Endothelial cell of umbilical vein (primary cell): ENCODE measurements at regions of chr13 and their contacts with region 1.

Region 1: GRCh38 chr13:98466634-98467236 is 110.2 kb downstream of the STK24 start:
- DNase-seq: peak; percentile 67
- H3K4me3 ChIP-seq: no peak overlapping the region
- H3K27ac ChIP-seq: no peak overlapping the region
- H3K4me1 ChIP-seq: no peaks in the 10 kb centered on the region
- H3K27me3 ChIP-seq: no peaks in the 10 kb centered on the region
- CTCF ChIP-seq: peak; percentile 75 to 77
- POLR2A ChIP-seq: no peak

Region 2: DNA sequence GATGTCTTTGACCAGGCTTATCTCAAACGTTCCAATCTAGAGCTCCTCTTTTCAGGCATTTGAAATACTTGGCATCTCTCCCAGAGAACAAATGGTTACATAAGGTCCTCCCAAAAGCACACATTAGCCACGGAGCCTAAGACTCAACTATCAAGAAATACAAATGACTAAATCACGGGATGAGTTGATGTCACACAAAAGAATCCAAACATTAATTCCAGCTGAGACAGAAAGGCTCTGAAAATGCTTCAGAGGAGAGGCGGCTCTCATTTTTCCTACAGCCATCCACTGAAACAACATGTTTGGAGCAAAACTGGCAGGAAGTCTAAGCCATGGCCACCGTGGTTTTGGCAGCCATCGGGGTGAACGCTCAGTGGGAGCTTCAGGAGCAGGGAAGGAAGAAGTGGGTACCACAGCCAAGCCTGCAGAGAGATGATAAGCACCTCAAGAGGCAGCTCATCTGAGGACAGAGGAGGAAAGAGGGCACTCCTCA is 12.3 kb before region 1 on chr13:
- CTCF ChIA-PET with region 1: interaction called, 25 read pairs
- POLR2A ChIA-PET with region 1: no interaction called
- dilution Hi-C with region 1: no loop called
- intact Hi-C with region 1: no loop called
- DNase-seq: peak; percentile 44
- H3K4me3 ChIP-seq: no peak overlapping the region
- H3K27ac ChIP-seq: no peak overlapping the region
- H3K4me1 ChIP-seq: no peaks in the 10 kb centered on the region
- H3K27me3 ChIP-seq: no peaks in the 10 kb centered on the region
- CTCF ChIP-seq: no peak
- POLR2A ChIP-seq: no peak

Region 3: DNA sequence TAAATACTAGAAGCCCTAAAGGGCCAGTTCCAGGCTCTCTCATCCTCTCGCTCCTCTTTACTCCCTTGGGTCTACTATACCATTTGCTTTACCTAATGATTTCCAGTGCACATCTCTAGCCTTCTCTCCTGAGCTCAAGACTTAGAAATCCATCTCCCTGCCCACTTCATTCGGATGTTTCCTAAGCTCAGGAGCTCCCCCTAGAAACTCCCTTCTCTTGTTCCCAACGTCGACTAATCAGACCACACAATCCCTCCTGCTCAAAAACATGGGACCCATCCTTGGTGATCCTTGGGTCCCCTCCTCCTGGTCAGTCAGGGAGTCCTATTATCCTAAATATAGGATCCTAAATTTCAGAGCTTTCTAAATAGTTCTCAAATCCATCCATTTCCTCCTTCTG is 131.3 kb after region 1 on chr13:
- CTCF ChIA-PET with region 1: interaction called, 17 read pairs
- POLR2A ChIA-PET with region 1: no interaction called
- dilution Hi-C with region 1: no loop called
- intact Hi-C with region 1: loop called (anchors 5 kb)
- DNase-seq: peak; percentile 31
- H3K4me3 ChIP-seq: no peak overlapping the region
- H3K27ac ChIP-seq: no peak overlapping the region
- H3K4me1 ChIP-seq: no peaks in the 10 kb centered on the region
- H3K27me3 ChIP-seq: peaks cover 9 to 14% of the 10 kb centered on the region in 2 experiments
- CTCF ChIP-seq: peak in 1 of 2 donors; percentile 36
- POLR2A ChIP-seq: no peak

Region 4: GRCh38 chr13:98761986-98762616 is 295.4 kb after region 1 on chr13:
- CTCF ChIA-PET with region 1: no interaction called
- POLR2A ChIA-PET with region 1: no interaction called
- dilution Hi-C with region 1: no loop called
- intact Hi-C with region 1: no loop called
- DNase-seq: no peak
- H3K4me3 ChIP-seq: no peak overlapping the region
- H3K27ac ChIP-seq: no peak overlapping the region
- H3K4me1 ChIP-seq: no peaks in the 10 kb centered on the region
- H3K27me3 ChIP-seq: peaks cover 6 to 17% of the 10 kb centered on the region in 2 experiments
- CTCF ChIP-seq: no peak
- POLR2A ChIP-seq: no peak